ENCODE measurements at regions of chr11 and their contacts with region 1.

Region 1: DNA sequence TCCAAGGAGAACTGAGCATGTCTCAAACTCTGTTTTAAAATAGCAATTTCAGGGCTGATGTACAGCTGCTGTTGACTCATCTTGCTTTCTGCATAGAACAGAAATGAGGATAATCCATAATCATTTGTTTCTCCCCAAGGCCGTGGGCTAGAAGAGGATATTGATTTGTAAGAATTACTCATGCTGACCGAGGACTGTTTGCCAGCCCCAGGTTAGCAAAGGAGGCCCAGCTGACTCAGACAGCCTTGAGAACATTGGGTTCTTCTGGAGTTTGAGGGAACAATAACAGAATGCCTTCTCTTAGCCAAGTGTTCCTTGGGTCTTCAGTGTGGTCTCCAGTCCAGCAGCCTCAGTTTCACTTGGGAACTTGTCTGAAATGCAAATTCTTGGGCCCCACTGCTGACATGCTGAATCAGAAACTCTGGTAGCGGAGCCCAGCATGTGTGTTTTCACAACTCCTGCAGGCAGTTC is 92.0 kb downstream of the ZC3H12C start:
- DNase-seq: peak; percentile 47
- H3K4me3 ChIP-seq: no peak overlapping the region
- H3K27ac ChIP-seq: no peak overlapping the region
- H3K4me1 ChIP-seq: peaks cover 11% of the 10 kb centered on the region
- H3K27me3 ChIP-seq: no peaks in the 10 kb centered on the region
- CTCF ChIP-seq: no peak
- POLR2A ChIP-seq: no peak

Region 2: DNA sequence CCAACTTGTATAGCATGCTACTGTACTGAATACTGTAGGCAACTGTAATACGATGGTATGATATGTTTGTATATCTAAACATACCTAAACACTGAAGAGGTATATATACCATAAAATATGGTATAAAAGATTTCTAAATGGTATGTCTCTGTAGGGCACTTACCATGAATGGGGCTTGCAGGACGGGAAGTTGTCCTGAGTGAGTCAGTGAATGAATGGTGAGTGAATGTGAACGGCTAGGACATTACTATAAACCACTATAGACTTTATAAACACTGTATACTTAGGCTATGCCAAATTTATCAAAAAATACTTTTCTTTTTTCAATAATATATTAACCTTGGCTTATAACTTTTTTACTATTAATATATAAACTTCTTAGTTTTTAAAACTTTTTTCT is 25.1 kb before region 1 on chr11:
- CTCF ChIA-PET with region 1: no interaction called
- POLR2A ChIA-PET with region 1: no interaction called
- dilution Hi-C with region 1: no loop called
- intact Hi-C with region 1: loop called (anchors 2 kb)
- DNase-seq: peak; percentile 13
- H3K4me3 ChIP-seq: no peak overlapping the region
- H3K27ac ChIP-seq: no peak overlapping the region
- H3K4me1 ChIP-seq: peaks cover 4% of the 10 kb centered on the region
- H3K27me3 ChIP-seq: no peaks in the 10 kb centered on the region
- CTCF ChIP-seq: no peak
- POLR2A ChIP-seq: no peak

Region 3: GRCh38 chr11:110356756-110357671 is 171.9 kb after region 1 on chr11:
- CTCF ChIA-PET with region 1: no interaction called
- POLR2A ChIA-PET with region 1: no interaction called
- dilution Hi-C with region 1: no loop called
- intact Hi-C with region 1: no loop called
- DNase-seq: peak; percentile 56
- H3K4me3 ChIP-seq: no peak overlapping the region
- H3K27ac ChIP-seq: peak overlapping the region; percentile 39
- H3K4me1 ChIP-seq: peaks cover 11% of the 10 kb centered on the region
- H3K27me3 ChIP-seq: no peaks in the 10 kb centered on the region
- CTCF ChIP-seq: no peak
- POLR2A ChIP-seq: no peak